Heart right ventricle (tissue), 16 donors: ENCODE measurements at regions of chr20 and their contacts with region 1.

Region 1: GRCh38 chr20:33817411-33817810 is 6.3 kb downstream of the CHMP4B start:
- DNase-seq: no peak
- ATAC-seq: no peak
- H3K4me3 ChIP-seq: no peak overlapping the region
- H3K27ac ChIP-seq: no peak overlapping the region
- H3K4me1 ChIP-seq: peaks cover 6 to 100% (median 91%) of the 10 kb centered on the region in 9 donors
- H3K27me3 ChIP-seq: no peaks in the 10 kb centered on the region
- CTCF ChIP-seq: no peak

Region 2: GRCh38 chr20:33773412-33774089 is 43.9 kb before region 1 on chr20:
- intact Hi-C with region 1: no loop called
- DNase-seq: no peak
- ATAC-seq: peak in 4 of 8 donors; percentile 47 to 66 (median 56)
- H3K4me3 ChIP-seq: no peak overlapping the region
- H3K27ac ChIP-seq: peak overlapping the region in 1 of 10 donors; percentile 10
- H3K4me1 ChIP-seq: peaks cover 0 to 9% (median 0%) of the 10 kb centered on the region in 9 donors
- H3K27me3 ChIP-seq: no peaks in the 10 kb centered on the region
- CTCF ChIP-seq: no peak

Region 3: DNA sequence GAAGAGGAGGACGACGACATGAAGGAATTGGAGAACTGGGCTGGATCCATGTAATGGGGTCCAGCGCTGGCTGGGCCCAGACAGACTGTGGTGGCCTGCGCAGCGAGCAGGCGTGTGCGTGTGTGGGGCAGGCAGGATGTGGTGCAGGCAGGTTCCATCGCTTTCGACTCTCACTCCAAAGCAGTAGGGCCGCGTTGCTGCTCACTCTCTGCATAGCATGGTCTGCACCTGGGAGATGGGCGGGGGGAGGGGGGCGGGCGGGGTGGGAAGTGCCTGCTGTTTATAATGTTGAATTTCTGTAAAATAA is 36.0 kb after region 1 on chr20:
- intact Hi-C with region 1: loop called in 1 of 10 experiments (anchors 5 kb)
- DNase-seq: no peak
- ATAC-seq: no peak
- H3K4me3 ChIP-seq: no peak overlapping the region
- H3K27ac ChIP-seq: no peak overlapping the region
- H3K4me1 ChIP-seq: peaks cover 0 to 16% (median 1%) of the 10 kb centered on the region in 9 donors
- H3K27me3 ChIP-seq: no peaks in the 10 kb centered on the region
- CTCF ChIP-seq: no peak

Region 4: DNA sequence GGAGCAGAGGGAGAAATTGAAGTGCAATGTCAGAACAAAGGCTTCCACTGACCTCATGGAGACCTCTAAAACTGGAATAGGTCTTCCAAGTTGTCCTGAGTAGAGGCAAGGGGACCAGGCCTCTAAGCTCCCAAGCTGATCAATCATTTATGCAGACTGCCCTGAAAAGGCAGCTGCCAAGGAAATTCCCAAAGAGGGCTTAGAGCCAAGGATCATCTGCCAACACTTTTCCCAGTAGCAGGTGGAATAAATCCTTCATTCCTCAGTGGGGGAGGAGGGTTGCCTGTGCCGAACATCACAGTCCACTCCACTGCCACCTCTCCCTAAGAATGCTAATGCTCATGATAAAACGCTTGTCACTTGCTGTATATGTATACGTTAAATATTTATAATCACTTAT is 147.0 kb after region 1 on chr20:
- intact Hi-C with region 1: no loop called
- DNase-seq: no peak
- ATAC-seq: no peak
- H3K4me3 ChIP-seq: no peak overlapping the region
- H3K27ac ChIP-seq: no peak overlapping the region
- H3K4me1 ChIP-seq: peaks cover 0 to 12% (median 5%) of the 10 kb centered on the region in 9 donors
- H3K27me3 ChIP-seq: no peaks in the 10 kb centered on the region
- CTCF ChIP-seq: no peak